ENCODE measurements at regions of chr11 and their contacts with region 1.

Region 1: DNA sequence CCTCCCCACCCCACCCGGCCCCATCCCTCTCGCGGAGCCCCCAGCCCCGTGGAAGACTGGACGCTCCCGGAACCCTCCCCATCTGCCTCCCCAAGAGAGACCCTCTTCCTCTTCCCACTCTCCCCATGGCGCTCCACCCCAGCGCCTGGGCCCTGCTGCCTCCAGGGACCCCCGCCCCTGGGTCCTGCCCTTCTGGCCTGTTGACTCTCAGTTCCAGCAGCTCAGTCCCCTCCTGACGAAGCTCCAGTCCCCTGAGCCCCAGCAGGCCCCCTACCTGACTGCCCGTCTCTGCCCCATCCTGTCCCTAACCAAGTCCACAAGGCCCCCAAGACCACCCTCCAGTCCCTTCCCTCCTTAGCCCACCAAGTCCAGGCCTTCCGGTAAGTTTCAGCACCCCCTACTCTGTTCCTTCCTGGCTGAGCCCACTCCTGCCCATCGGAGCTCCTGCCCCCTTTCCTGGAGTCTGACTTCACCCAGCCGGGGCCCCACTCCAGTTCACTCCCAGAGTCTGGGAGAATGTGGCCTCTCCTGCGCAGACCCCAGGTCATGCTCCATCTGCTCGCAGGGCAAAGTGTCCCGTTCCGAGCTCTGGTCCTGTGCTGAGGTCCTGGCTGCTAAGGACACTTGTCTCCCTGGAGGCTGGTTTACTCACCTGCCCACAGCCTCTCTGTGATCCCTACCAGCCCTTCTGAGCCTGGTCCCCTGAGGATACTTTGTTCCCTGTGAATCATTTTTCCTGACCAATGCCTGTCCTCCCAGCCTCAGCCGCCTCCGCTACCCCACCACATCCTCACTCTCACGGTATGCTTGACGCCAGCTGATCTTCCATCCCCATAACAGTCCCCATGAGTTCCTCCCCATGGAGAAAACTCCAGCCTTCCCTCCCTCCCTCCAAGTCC is 732 bp downstream of the IFITM10 start:
- DNase-seq: peak; percentile 92
- H3K4me3 ChIP-seq: peak overlapping the region; percentile 52 to 74 (median 67)
- H3K27ac ChIP-seq: peak overlapping the region; percentile 54
- H3K4me1 ChIP-seq: peaks cover 59% of the 10 kb centered on the region
- H3K27me3 ChIP-seq: no peaks in the 10 kb centered on the region
- CTCF ChIP-seq: no peak

Region 2: DNA sequence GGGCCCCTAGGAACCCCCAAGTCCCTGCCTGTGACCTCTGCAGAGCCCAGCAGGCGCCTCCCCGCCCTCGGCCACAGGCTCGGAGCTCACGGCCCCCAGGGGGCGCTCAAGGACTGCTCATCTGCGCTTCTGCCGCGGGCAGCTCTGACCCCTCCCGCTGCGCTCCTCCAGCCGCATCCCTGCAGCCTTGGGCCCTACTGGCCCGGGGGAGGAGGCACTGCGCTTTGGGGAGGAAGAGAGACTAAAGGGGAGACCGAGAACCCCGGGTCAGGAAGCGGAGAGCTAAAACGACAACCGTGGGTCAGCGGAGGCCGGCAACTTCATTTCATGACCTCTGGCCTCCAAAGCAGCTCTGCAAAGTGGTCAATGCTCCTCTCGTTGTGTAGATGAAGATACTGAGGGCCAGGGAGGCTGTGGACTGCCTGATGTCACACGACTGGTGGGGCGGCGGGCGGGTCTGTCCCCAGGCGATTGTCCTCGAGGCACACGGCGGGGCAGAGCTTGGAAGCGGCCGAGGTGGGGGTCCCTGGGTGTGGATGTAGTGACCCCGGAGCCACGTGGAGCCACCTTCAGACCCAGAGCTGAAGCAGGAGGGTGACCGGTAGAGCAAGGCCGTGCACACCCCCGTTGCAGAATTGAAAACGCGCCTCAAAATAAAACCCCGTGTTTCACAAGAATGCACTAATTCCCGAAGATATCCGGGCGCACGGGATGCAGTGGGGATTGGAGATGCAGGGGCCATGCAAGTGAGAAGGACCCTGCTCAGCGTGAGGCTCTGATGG is 55.4 kb before region 1 on chr11:
- CTCF ChIA-PET with region 1: no interaction called
- dilution Hi-C with region 1: no loop called
- in situ Hi-C with region 1: no loop called
- intact Hi-C with region 1: loop called (anchors 5 kb)
- DNase-seq: peak; percentile 58
- H3K4me3 ChIP-seq: peak overlapping the region in 2 of 3 experiments; percentile 49 to 54
- H3K27ac ChIP-seq: no peak overlapping the region
- H3K4me1 ChIP-seq: peaks cover 14% of the 10 kb centered on the region
- H3K27me3 ChIP-seq: peaks cover 8% of the 10 kb centered on the region
- CTCF ChIP-seq: peak; percentile 72 to 92

Region 3: DNA sequence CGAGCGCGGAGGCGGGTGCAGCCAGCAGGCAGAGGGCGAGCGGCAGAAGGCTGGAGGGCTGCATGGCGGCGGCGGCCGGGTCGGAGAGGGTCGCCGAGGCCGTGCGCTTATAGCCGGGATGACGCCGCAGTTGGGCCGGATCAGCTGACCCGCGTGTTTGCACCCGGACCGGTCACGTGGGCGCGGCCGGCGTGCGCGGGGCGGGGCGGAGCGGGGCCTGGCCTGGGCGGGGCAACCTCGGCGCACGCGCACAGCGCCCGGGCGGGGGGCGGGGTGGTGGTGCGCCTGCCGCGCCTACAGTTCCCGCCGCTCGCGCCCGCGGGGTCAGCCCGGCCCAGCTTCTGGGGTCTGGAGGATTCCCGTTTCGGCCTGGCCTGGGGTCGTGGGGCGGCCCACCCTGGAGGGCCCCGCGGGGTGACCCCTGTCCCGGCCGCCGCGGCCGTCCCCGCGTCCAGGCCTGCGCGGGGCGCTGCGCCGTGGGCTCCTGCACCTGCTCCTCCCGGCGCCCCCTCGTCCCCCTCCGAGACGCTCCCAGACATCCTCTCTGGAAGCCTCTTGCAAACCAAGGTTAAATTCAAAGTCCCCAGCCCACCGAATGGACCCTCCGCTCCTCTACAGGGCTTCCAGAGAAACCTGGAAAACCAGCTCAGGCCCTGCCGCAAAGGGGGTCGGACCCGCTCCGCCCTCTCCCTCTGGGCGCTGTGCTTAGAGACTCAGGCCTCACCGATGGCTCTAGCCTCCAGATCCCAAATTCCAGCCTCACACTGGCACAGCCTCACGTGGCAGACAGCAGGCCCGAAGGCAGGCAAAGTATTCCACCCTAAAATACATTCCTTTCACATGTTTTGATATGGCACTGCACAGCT is 14.4 kb after region 1 on chr11 and contains the start of gene CTSD:
- CTCF ChIA-PET with region 1: no interaction called
- dilution Hi-C with region 1: no loop called
- in situ Hi-C with region 1: no loop called
- intact Hi-C with region 1: loop called (anchors 1 kb)
- DNase-seq: peak; percentile 66
- H3K4me3 ChIP-seq: peak within 1 kb of the TSS; percentile 58 to 93 (median 83)
- H3K27ac ChIP-seq: peak within 1 kb of the TSS; percentile 32
- H3K4me1 ChIP-seq: peaks cover 41% of the 10 kb centered on the region
- H3K27me3 ChIP-seq: no peaks in the 10 kb centered on the region
- CTCF ChIP-seq: no peak
- total RNA-seq, gene CTSD: 550 to 659 TPM